Activated B cell treated with CpG ODN at 0.5 μM for 24 hours (primary cell): ENCODE measurements at regions of chr11 and their contacts with region 1.

Region 1: GRCh38 chr11:60762851-60763691 is 6.4 kb downstream of the MS4A15 start:
- DNase-seq: no peak
- ATAC-seq: peak; percentile 90
- H3K4me3 Mint-ChIP-seq: peak overlapping the region; percentile 44
- H3K27ac Mint-ChIP-seq: peak overlapping the region; percentile 56
- H3K4me1 Mint-ChIP-seq: peaks cover 55% of the 10 kb centered on the region
- H3K27me3 Mint-ChIP-seq: peaks cover 18% of the 10 kb centered on the region
- CTCF ChIP-seq: no peak

Region 2: DNA sequence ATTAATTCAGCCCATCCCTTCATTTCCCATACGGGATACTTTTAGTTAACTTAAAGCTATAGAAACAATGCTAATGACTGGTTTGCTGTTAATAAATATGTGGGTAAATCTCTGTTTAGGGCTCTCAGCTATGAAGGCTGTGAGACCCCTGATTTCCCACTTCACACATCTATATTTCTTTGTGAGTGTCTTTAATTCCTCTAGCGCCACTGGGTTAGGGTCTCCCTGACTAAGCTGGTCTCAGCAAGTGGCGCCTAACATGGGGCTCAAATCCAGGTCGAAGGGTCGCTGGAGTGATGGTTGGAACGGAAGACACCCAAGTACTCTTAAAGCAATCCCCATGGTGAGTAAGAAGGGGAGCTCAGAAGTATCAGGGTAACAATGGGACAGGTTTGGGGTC is 839.3 kb before region 1 on chr11:
- CTCF ChIA-PET with region 1: no interaction called
- POLR2A ChIA-PET with region 1: no interaction called
- intact Hi-C with region 1: no loop called
- DNase-seq: no peak
- ATAC-seq: no peak
- H3K4me3 Mint-ChIP-seq: no peak overlapping the region
- H3K27ac Mint-ChIP-seq: no peak overlapping the region
- H3K4me1 Mint-ChIP-seq: no peaks in the 10 kb centered on the region
- H3K27me3 Mint-ChIP-seq: peaks cover 5% of the 10 kb centered on the region
- CTCF ChIP-seq: no peak

Region 3: GRCh38 chr11:60357771-60358170 is 405.3 kb before region 1 on chr11:
- CTCF ChIA-PET with region 1: no interaction called
- POLR2A ChIA-PET with region 1: no interaction called
- intact Hi-C with region 1: loop called (anchors 5 kb)
- DNase-seq: no peak
- ATAC-seq: peak; percentile 82
- H3K4me3 Mint-ChIP-seq: peak overlapping the region; percentile 25
- H3K27ac Mint-ChIP-seq: peak overlapping the region; percentile 74
- H3K4me1 Mint-ChIP-seq: peaks cover 46% of the 10 kb centered on the region
- H3K27me3 Mint-ChIP-seq: no peaks in the 10 kb centered on the region
- CTCF ChIP-seq: no peak

Region 4: DNA sequence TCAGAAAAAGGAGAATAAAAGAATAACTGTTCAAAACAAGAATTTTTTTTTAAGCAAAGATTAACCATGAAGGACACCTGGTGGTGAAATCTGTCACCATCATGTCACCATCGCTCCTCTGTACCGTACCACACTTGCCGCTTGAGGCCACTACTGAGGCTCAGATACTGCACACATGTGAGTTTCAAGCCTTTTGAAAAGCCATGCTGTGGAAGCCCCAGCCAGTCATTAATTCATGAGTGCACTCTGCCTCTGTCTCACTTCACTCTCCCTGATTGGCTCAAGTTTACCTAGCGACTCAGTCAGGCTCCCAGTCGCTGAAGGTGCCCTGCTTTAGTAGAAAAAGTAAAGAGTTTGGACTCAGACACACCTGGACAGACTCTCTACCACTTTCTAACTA is 277.1 kb before region 1 on chr11:
- CTCF ChIA-PET with region 1: no interaction called
- POLR2A ChIA-PET with region 1: no interaction called
- intact Hi-C with region 1: loop called (anchors 10 kb)
- DNase-seq: peak; percentile 40
- ATAC-seq: peak; percentile 95
- H3K4me3 Mint-ChIP-seq: peak overlapping the region; percentile 42
- H3K27ac Mint-ChIP-seq: peak overlapping the region; percentile 63
- H3K4me1 Mint-ChIP-seq: peaks cover 55% of the 10 kb centered on the region
- H3K27me3 Mint-ChIP-seq: no peaks in the 10 kb centered on the region
- CTCF ChIP-seq: peak; percentile 44

Region 5: GRCh38 chr11:60775420-60775961 is 12.4 kb after region 1 on chr11:
- CTCF ChIA-PET with region 1: interaction called, 86 read pairs
- POLR2A ChIA-PET with region 1: interaction called, 7 read pairs
- intact Hi-C with region 1: loop called (anchors 1 kb)
- DNase-seq: peak; percentile 64
- ATAC-seq: peak; percentile 94
- H3K4me3 Mint-ChIP-seq: no peak overlapping the region
- H3K27ac Mint-ChIP-seq: no peak overlapping the region
- H3K4me1 Mint-ChIP-seq: peaks cover 11% of the 10 kb centered on the region
- H3K27me3 Mint-ChIP-seq: peaks cover 10% of the 10 kb centered on the region
- CTCF ChIP-seq: peak; percentile 44

Region 6: DNA sequence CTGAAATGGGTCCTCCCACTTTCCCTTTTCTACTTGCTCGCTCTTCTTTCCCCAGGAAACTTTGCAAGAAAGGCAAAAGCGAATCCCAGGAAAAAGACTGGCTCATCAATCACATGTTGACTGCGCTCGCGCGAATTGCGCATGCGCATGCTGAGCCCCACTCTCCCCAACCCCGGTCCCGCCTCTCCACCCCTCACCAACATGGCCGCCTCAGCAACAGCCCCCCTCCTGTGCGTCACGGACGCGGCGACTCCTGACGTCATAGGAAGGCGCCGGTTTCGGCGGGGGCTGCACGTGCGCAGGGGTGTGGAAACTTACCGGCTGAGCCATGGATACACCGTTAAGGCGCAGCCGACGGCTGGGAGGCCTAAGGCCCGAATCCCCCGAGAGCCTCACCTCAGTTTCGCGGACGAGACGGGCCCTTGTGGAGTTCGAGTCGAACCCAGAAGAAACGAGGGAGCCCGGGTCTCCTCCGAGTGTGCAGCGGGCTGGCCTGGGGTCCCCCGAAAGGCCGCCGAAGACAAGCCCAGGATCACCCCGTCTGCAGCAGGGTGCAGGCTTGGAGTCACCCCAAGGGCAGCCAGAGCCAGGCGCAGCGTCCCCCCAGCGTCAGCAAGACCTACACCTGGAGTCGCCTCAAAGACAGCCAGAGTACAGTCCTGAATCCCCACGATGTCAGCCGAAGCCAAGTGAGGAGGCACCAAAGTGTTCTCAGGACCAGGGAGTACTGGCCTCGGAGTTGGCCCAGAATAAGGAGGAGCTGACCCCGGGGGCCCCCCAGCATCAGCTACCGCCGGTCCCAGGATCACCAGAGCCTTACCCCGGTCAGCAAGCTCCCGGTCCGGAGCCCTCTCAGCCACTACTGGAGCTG is 79.0 kb after region 1 on chr11 and contains the start of gene CCDC86:
- CTCF ChIA-PET with region 1: no interaction called
- POLR2A ChIA-PET with region 1: no interaction called
- intact Hi-C with region 1: loop called (anchors 1 kb)
- DNase-seq: peak; percentile 100
- ATAC-seq: peak; percentile 96
- H3K4me3 Mint-ChIP-seq: peak within 1 kb of the TSS; percentile 83
- H3K27ac Mint-ChIP-seq: peak within 1 kb of the TSS; percentile 85
- H3K4me1 Mint-ChIP-seq: peaks cover 41% of the 10 kb centered on the region
- H3K27me3 Mint-ChIP-seq: no peaks in the 10 kb centered on the region
- CTCF ChIP-seq: no peak
- total RNA-seq, gene CCDC86: 30.3 and 30.6 TPM in 2 replicates

Region 7: DNA sequence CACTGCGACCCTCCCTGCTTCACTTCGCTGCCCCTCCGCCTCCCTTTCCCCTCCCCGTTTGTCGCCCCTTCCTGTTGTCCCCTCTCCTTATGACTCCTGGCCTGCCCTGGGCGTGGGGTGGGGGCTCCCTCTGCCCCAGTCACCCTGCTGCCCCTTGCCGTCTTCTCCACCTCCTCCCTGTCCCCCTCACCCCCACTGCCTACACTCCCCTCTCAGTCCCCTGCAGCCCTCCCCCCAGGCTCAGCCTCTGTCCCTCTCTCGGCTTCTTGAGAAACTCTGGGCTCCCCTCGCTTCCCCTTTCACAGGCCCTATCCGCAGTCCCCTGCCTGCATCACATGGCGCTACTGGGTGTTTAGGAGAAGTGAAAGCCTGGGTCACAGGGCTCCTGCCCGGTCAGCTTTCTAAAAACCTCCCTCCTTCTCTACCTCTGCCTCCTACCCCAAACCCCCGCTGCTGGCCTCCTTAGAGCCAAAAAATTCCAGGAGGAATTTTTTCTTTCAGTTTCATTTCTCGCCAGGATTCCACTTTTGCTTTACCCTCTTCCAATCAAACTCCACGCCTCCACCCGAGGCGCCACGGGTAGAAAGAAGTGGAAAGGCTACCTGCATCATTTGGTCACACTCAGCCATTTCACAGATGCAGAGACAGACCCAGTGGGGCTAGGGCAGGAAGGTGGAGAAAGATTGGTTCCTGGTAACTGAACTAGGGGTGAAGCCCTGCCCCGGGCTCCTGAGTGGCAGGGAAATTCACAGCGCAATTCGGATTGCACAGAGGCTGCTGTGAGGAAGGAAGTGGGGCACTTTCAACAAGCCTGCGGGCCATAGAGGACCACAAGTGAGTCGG is 189.0 kb after region 1 on chr11 and contains the start of gene SLC15A3:
- CTCF ChIA-PET with region 1: no interaction called
- POLR2A ChIA-PET with region 1: no interaction called
- intact Hi-C with region 1: loop called (anchors 5 kb)
- DNase-seq: peak; percentile 62
- ATAC-seq: peak; percentile 88
- H3K4me3 Mint-ChIP-seq: peak within 1 kb of the TSS; percentile 91
- H3K27ac Mint-ChIP-seq: peak within 1 kb of the TSS; percentile 91
- H3K4me1 Mint-ChIP-seq: peaks cover 57% of the 10 kb centered on the region
- H3K27me3 Mint-ChIP-seq: no peaks in the 10 kb centered on the region
- CTCF ChIP-seq: no peak
- total RNA-seq, gene SLC15A3: 76.4 and 77.8 TPM in 2 replicates

Region 8: DNA sequence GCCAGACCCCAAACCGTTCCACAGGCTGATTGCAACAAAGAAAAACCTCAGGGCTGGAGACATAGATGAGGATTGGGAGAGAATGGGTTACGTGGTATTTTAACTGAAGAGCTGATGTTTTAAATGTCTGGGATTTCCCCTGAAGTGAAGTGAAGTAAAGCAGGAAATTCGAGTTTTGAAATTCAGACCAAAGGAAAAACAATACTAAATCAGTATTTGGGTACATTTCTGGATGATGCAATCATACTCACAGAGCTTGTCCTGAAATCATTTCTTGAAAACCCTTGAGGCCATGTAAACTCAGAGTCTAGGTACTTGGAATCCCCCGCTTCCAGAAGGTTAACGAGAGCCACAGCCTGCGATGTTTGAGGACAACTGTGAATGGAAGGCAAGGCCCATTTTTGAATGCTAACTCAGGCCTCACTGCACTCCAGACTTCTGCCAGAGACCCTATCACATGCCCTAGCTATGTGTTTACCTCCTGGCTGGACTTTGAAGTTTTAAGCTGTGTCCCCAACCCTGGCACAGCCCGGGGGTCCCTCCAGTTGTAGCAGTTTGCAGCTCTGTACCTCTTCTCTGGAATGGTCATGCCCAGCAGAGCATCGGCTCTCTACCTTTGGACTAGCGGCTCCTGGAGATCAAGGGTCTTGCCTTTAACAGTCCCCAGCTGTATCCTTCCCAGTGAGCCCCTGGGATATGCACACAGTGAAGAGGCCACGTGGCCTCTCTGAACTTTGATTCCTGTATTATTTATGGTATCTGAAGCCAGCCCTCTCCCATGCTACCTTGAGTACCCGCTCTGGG is 1209.8 kb after region 1 on chr11:
- CTCF ChIA-PET with region 1: no interaction called
- POLR2A ChIA-PET with region 1: no interaction called
- intact Hi-C with region 1: no loop called
- DNase-seq: peak; percentile 12
- ATAC-seq: no peak
- H3K4me3 Mint-ChIP-seq: peak overlapping the region; percentile 72
- H3K27ac Mint-ChIP-seq: peak overlapping the region; percentile 76
- H3K4me1 Mint-ChIP-seq: peaks cover 50% of the 10 kb centered on the region
- H3K27me3 Mint-ChIP-seq: no peaks in the 10 kb centered on the region
- CTCF ChIP-seq: no peak